ENCODE measurements at regions of chr2 and their contacts with region 1.

Region 1: DNA sequence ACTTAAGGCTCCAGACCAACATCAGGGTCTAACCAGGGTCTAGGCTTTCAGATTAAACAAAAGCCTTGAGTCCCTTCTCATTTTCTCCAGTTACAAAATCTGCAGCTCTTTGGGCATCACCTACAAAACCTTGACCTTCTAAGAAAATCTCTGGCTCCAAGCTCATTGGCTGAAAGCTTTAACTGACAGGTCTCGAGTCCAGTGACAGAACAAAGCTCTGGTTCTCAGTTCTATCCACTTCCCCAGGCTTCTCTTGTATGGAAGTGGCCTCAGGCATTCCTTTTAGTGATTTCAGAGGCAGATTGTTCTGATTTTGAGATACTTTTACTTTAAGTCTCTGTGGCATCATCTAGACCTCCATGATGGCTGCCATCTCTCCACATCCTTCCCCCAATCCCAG is 11.3 kb downstream of the SIX2 start:
- DNase-seq: no peak
- H3K4me3 ChIP-seq: no peak overlapping the region
- H3K4me3 Mint-ChIP-seq: no peak overlapping the region
- H3K27ac Mint-ChIP-seq: no peak overlapping the region
- H3K4me1 ChIP-seq: no peaks in the 10 kb centered on the region
- H3K4me1 Mint-ChIP-seq: no peaks in the 10 kb centered on the region
- H3K27me3 ChIP-seq: 0 out of 2 replicates have a peak, but pooled peaks cover 2% of the 10 kb centered on the region
- H3K27me3 Mint-ChIP-seq: peaks cover 20% of the 10 kb centered on the region
- CTCF ChIP-seq: no peak

Region 2: GRCh38 chr2:45046786-45047185 is 48.8 kb after region 1 on chr2:
- CTCF ChIA-PET with region 1: no interaction called
- POLR2A ChIA-PET with region 1: no interaction called
- intact Hi-C with region 1: loop called (anchors 2 kb)
- DNase-seq: no peak
- H3K4me3 ChIP-seq: no peak overlapping the region
- H3K4me3 Mint-ChIP-seq: no peak overlapping the region
- H3K27ac Mint-ChIP-seq: no peak overlapping the region
- H3K4me1 ChIP-seq: 0 out of 2 replicates have a peak, but pooled peaks cover 3% of the 10 kb centered on the region
- H3K4me1 Mint-ChIP-seq: peaks cover 7% of the 10 kb centered on the region
- H3K27me3 ChIP-seq: no peaks in the 10 kb centered on the region; the same call in 1 of the 2 replicates
- H3K27me3 Mint-ChIP-seq: peaks cover 28% of the 10 kb centered on the region
- CTCF ChIP-seq: no peak

Measured in Caco-2 (cell line).